ENCODE measurements at regions of chr15 and their contacts with region 1.

Region 1: DNA sequence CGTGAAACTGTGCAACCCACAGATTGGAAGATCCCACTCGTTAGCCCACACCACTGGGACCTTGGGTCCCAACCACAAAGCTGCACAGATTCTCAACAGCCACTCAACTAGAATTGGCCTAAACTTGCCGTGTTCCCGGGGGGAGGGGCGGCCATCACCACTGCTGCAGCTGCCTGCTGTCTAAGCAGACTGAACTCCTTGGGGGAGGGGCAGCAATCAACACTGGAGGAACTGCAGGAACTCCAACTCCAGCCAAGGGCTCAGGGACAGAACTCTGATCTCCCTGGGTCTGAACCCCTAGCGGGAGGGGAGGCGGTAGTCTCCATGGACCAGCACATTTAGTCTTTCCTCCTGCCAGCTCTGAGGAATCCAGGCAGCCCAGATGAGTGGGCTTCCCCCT is 205.9 kb downstream of the RSL24D1 start:
- DNase-seq: no peak

Region 2: DNA sequence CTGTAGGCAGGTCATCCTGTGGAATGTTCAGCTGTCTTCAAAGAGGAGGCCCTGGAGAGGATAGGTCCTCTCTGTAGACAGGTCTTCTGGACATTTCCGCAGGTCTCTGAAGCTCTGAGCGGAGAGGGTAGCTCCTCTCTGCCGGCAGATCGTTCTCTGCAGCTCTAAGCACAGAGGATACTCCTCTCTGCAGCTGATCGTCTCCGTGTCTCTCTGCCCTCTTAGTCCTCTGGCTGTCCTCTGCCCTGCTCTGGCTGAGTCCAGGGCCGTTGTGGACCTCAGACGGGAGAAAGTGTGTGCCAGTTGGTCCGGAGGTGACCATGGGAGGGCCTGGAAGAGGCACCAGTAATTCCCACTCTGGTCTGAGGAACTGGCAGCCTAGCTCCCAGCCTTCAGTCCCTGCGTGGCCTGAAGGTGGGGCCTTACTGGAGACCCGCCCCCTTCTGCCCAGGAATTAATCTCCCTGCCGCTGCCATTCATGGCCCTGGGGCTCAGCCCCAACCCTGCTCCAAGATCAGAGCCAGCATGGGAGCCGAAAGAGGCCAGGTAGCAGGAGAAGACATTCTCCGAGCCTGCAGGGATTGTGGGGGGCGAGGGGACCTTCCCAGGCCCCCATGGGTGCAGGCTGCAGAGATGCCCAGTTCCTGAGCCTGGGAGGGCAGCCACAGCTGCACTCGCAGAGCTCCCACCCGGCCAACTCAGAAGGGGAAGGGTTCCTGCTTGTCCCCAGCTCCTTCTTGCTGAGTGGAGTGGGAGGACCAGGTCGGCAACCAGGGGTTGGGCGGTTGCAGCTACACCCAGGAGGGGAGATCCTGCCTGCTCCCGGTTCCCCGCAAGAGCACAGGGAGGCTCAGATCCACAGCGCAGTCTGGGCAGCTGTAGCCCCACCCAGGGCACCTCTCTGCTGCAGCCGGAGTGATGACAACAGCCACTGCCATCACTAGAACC is 282.7 kb before region 1 on chr15:
- intact Hi-C with region 1: no loop called
- DNase-seq: no peak

Region 3: DNA sequence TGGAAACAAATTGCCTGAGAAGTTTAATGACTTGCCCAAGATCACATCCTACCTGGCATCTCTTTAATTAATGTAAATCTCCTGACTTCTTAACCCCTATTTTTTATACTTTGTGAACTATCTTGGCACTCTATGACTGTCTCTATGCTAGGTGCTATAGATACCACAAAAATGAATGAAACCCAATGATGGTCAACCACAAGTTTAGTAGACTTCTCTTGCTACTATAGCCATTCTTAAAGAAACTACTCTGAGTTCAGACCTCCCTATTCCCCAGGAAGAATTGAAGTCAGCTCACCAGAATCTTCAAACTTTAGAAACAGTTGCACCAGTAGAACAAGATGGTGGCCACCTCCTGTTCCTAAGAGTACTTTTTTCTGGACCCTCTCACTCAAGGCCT is 14.9 kb after region 1 on chr15:
- intact Hi-C with region 1: loop called in 1 of 2 experiments (anchors 1 kb)
- DNase-seq: no peak

Region 4: DNA sequence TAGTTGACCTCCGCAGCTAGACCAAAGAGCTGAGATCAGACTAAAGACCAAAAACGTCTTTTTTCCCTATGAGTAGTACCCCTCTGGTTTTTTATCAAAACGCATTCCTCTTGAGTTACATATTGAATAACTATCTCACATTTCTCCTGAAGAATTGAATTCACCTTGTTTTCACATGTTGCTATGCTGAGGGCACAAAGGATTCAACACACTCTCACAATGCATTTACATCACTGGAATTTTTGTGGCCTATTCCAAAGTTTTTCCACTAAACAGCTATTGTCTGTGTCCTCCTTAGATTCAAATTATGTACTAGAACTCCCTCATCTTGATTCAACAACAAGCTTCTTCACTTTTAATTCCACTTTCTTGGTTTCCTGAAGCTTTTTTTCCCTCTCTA is 93.4 kb after region 1 on chr15:
- intact Hi-C with region 1: no loop called
- DNase-seq: no peak

Region 5: GRCh38 chr15:55124616-55125015 is 133.8 kb after region 1 on chr15:
- intact Hi-C with region 1: no loop called
- DNase-seq: no peak

Measured in posterior vena cava (tissue), 2 donors.